ENCODE measurements at regions of chr15 and their contacts with region 1.

Region 1: DNA sequence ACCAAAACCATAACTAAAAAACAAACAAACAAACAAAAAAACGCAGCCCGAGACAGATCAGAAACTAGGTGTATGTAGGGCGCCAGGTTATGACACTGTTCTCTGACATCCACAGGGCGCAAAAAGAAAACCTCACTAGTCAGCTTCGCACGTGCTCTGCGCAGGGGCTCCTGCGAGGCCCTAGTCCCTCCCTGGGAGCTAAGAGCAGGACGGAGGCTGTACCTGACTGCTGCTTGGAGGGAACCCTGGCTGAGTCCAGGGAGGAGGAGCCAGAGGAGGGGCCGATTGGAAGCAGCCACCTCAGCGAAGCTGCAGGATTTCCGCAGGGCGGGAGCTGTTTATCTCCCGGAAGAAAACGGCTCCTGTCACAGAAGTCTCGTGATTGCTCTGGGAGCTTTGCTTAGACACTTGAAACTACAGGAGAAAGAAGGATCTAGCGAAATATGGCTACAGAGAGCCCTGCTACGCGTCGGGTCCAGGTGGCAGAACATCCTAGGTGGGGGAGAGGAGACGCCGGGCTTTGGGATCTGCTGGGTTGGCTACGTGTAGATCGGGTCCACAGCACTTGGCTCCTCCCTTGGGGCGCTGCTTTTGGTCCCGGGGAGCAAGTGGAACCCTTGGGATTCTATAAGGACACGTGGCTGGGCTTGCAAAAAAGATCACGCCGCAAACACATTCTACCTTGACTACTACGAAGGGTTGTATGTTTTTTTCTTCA is at the start of gene GALK2:
- DNase-seq: peak; percentile 95 to 97
- H3K4me3 ChIP-seq: peak within 1 kb of the TSS; percentile 61
- H3K4me3 Mint-ChIP-seq: peak within 1 kb of the TSS; percentile 90
- H3K27ac Mint-ChIP-seq: peak within 1 kb of the TSS; percentile 97
- H3K4me1 ChIP-seq: peaks cover 6% of the 10 kb centered on the region
- H3K4me1 Mint-ChIP-seq: peaks cover 12% of the 10 kb centered on the region
- H3K27me3 ChIP-seq: no peaks in the 10 kb centered on the region
- H3K27me3 Mint-ChIP-seq: no peaks in the 10 kb centered on the region
- CTCF ChIP-seq: no peak
- total RNA-seq, gene GALK2: 25.5 and 29.8 TPM in 2 replicates

Region 2: GRCh38 chr15:48507416-48508065 is 662.5 kb before region 1 on chr15:
- CTCF ChIA-PET with region 1: no interaction called
- POLR2A ChIA-PET with region 1: no interaction called
- intact Hi-C with region 1: no loop called
- DNase-seq: peak in 1 of 2 experiments; percentile 39
- H3K4me3 ChIP-seq: no peak overlapping the region
- H3K4me3 Mint-ChIP-seq: no peak overlapping the region
- H3K27ac Mint-ChIP-seq: no peak overlapping the region
- H3K4me1 ChIP-seq: no peaks in the 10 kb centered on the region
- H3K4me1 Mint-ChIP-seq: no peaks in the 10 kb centered on the region
- H3K27me3 ChIP-seq: no peaks in the 10 kb centered on the region
- H3K27me3 Mint-ChIP-seq: peaks cover 5% of the 10 kb centered on the region
- CTCF ChIP-seq: peak; percentile 50 to 57

Region 3: GRCh38 chr15:48925714-48926223 is 244.3 kb before region 1 on chr15:
- CTCF ChIA-PET with region 1: no interaction called
- POLR2A ChIA-PET with region 1: no interaction called
- intact Hi-C with region 1: no loop called
- DNase-seq: no peak
- H3K4me3 ChIP-seq: no peak overlapping the region
- H3K4me3 Mint-ChIP-seq: no peak overlapping the region
- H3K27ac Mint-ChIP-seq: no peak overlapping the region
- H3K4me1 ChIP-seq: no peaks in the 10 kb centered on the region
- H3K4me1 Mint-ChIP-seq: no peaks in the 10 kb centered on the region
- H3K27me3 ChIP-seq: no peaks in the 10 kb centered on the region
- H3K27me3 Mint-ChIP-seq: peaks cover 14% of the 10 kb centered on the region
- CTCF ChIP-seq: no peak

Region 4: GRCh38 chr15:49115062-49115461 is 55.0 kb before region 1 on chr15:
- CTCF ChIA-PET with region 1: no interaction called
- POLR2A ChIA-PET with region 1: no interaction called
- intact Hi-C with region 1: no loop called
- DNase-seq: no peak
- H3K4me3 ChIP-seq: no peak overlapping the region
- H3K4me3 Mint-ChIP-seq: no peak overlapping the region
- H3K27ac Mint-ChIP-seq: no peak overlapping the region
- H3K4me1 ChIP-seq: no peaks in the 10 kb centered on the region
- H3K4me1 Mint-ChIP-seq: no peaks in the 10 kb centered on the region
- H3K27me3 ChIP-seq: no peaks in the 10 kb centered on the region
- H3K27me3 Mint-ChIP-seq: no peaks in the 10 kb centered on the region
- CTCF ChIP-seq: no peak

Region 5: DNA sequence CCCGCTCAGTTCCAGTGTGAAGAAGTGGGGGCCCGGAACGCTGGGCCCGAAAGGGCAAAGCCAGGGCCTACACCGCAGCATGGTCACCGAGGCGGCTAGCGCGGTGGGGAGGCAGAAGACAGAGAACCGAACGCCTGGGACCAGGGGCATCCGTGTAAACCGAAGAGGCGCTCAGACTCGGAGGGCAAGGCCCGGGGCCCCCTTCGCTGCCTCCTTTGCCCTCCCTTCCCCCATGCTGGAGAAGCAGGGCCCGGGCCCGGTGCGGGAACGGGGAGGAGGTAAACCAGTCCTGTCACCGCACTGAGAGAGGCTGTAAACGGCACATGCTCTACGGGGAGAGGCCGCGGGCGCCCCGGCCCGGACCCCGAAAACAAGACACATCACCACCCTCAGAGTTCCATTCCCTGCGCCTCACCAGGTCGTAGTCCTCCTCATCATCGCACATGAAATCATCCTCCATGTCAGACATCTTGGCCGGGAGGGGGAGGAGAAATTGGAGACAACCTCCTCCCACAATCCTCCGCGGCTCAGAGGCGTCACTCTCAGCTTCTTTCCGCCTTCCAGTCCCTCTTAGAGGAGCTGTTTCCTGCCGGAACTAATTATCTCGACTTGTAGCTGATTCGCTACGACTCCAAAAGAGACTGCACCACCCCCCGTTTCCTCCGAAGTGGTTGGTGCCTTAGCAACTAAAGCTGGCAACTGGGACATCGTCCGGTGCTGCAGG is 14.8 kb before region 1 on chr15 and contains the start of gene COPS2:
- CTCF ChIA-PET with region 1: interaction called, 6 read pairs
- POLR2A ChIA-PET with region 1: interaction called, 39 read pairs
- intact Hi-C with region 1: loop called (anchors 1 kb)
- DNase-seq: peak; percentile 94 to 95
- H3K4me3 ChIP-seq: peak within 1 kb of the TSS; percentile 98
- H3K4me3 Mint-ChIP-seq: peak within 1 kb of the TSS; percentile 99
- H3K27ac Mint-ChIP-seq: peak within 1 kb of the TSS; percentile 97
- H3K4me1 ChIP-seq: no peaks in the 10 kb centered on the region
- H3K4me1 Mint-ChIP-seq: peaks cover 7% of the 10 kb centered on the region
- H3K27me3 ChIP-seq: no peaks in the 10 kb centered on the region
- H3K27me3 Mint-ChIP-seq: no peaks in the 10 kb centered on the region
- CTCF ChIP-seq: no peak
- total RNA-seq, gene COPS2: 83.8 and 85.4 TPM in 2 replicates

Region 6: DNA sequence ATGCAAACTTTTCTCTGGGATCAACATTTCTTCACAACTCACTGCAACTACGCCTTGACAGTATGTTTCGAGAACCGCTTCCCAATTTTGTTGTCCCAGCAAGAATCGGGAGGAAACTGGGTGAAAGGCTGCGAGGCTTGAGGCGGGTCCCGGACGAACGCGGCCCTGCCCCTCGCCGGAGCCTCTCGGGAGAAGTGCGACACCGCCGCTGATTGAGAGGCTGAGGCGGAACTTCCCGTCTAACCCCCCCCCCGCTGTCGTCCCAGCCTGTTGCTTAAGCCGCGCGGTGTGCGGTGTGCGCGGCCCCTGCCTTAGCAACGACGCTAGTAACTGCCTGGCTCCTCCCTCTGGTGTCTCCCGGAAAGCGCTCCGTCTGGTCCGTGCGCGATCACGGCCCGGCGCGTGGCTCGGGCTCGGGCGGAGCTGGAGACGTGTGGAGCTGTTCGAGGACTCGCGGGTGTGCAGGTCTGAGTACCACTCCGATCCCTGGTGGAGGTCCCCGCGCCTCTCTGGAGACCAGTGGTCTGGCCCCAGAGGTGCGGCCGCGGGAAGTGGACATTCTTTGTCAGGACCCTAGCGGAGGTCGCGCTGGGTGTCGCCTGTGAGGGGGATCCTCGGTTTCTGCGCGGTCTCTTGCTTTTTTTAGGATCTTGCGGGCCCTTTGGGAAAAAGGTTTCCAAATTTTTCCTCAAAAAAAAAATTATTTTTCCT is 450.8 kb after region 1 on chr15 and contains the starts of genes DTWD1 and FAM227B:
- CTCF ChIA-PET with region 1: no interaction called
- POLR2A ChIA-PET with region 1: no interaction called
- intact Hi-C with region 1: loop called (anchors 10 kb)
- DNase-seq: peak; percentile 92 to 95
- H3K4me3 ChIP-seq: peak within 1 kb of the TSS; percentile 86
- H3K4me3 Mint-ChIP-seq: peak within 1 kb of the TSS; percentile 87
- H3K27ac Mint-ChIP-seq: peak within 1 kb of the TSS; percentile 96
- H3K4me1 ChIP-seq: peaks cover 4% of the 10 kb centered on the region
- H3K4me1 Mint-ChIP-seq: no peaks in the 10 kb centered on the region
- H3K27me3 ChIP-seq: no peaks in the 10 kb centered on the region
- H3K27me3 Mint-ChIP-seq: no peaks in the 10 kb centered on the region
- CTCF ChIP-seq: no peak
- total RNA-seq, gene DTWD1: 11.9 and 14.4 TPM in 2 replicates
- total RNA-seq, gene FAM227B: 1.1 and 2.3 TPM in 2 replicates

Measured in Caco-2 (cell line).